Heart right ventricle (tissue), 16 donors: ENCODE measurements at regions of chr11 and their contacts with region 1.

Region 1: DNA sequence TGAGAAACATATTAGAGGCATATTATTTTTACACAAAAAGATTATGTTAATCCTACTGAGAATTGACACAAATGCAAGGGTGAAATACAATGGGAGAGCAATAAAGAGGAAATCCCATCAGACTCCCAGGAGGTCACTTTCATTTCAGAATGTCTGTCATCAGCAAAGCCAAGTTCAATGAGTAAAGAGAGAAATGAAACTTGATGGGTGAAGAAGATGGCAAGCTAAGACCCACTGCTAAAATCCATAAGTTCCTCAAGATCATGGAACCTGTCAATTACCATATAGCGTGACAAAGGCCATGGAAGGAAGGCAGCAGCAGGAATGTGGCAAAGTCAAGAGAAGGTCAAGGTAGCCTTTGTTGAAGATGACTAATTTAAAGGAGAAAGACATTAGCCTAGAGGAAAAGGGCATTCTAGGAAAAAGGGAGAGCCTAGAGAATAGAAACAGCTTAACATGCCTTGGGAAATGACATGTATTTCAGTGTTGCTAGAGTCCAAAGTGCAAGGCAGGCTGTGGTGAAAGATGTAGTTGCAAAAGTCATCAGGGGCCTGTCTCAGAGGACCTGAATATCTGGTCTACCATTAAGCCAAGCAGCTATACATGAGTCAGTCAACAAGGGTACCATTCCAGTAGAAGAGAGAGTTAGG is 43.1 kb downstream of the FAM168A start:
- DNase-seq: no peak
- ATAC-seq: peak in 1 of 8 donors; percentile 13
- H3K4me3 ChIP-seq: no peak overlapping the region
- H3K27ac ChIP-seq: peak overlapping the region in 7 of 10 donors; percentile 11 to 50 (median 35)
- H3K4me1 ChIP-seq: peaks cover 0 to 53% (median 41%) of the 10 kb centered on the region in 9 donors
- H3K27me3 ChIP-seq: no peaks in the 10 kb centered on the region
- CTCF ChIP-seq: no peak

Region 2: DNA sequence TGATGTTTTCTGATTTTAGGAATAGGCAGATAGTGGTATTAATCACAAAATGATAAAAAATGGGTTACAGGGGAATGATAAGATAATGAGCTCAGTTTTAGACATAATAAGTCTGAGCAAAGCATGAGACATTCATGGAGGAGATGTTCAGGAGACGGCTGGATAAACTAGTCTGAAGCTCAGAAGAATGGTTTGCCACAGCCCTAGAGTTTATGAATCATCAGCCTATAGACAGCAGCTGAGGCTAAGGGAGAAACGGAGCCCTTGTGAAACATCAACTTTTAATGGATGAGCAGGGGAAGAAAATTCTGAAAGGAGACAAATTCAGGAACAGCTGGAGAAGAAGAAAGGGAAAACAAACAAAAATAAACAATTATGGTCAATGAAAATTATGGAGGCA is 91.4 kb before region 1 on chr11:
- intact Hi-C with region 1: loop called in 1 of 10 experiments (anchors 10 kb)
- DNase-seq: no peak
- ATAC-seq: no peak
- H3K4me3 ChIP-seq: no peak overlapping the region
- H3K27ac ChIP-seq: peak overlapping the region in 2 of 10 donors; percentile 45 to 70
- H3K4me1 ChIP-seq: peaks cover 4 to 81% (median 55%) of the 10 kb centered on the region in 9 donors
- H3K27me3 ChIP-seq: no peaks in the 10 kb centered on the region
- CTCF ChIP-seq: no peak

Region 3: DNA sequence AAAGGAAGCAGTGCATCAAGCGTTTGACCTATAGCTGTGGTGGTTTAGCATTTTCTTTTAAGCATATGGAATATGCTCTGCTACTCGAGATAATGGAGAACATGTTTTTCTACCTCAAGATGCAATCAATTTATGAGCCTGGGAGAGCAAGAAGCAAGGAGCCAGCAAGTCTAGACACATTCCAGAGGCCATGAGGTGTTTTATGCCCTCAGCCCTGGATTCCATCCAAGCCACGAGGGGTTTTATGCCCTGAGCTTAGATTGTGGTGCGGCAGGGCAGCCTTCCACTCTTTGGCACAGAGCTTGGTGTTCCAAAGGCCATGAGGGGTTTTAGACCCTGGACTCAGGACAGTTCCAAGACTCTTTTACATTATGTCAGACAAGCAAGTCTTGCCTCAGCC is 384.3 kb after region 1 on chr11:
- intact Hi-C with region 1: no loop called
- DNase-seq: no peak
- ATAC-seq: no peak
- H3K4me3 ChIP-seq: no peak overlapping the region
- H3K27ac ChIP-seq: no peak overlapping the region
- H3K4me1 ChIP-seq: no peaks in the 10 kb centered on the region
- H3K27me3 ChIP-seq: no peaks in the 10 kb centered on the region
- CTCF ChIP-seq: no peak